PC-9 (cell line): ENCODE measurements at regions of chr16 and their contacts with region 1.

Region 1: DNA sequence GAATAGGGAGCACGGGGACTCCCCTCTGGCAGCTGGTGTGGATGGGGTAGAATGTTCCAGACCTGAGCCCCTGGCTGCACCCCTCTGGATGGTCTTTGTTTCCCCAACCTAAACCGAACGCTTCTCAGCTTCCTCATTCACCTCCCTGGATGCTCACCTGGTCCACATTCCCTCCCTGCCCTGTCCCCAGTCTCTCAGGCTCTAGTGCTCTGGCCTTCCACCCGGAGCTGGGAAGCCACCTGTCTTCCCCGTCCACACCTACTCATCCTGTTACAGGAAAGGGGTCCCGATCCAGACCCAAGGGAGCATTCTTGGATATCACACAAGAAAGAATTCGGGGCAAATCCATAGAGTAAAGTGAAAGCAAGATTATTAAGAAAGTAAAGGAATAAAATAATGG is 73.5 kb downstream of the CYLD start:
- DNase-seq: no peak
- H3K4me3 ChIP-seq: no peak overlapping the region
- H3K27ac ChIP-seq: no peak overlapping the region
- H3K4me1 ChIP-seq: no peaks in the 10 kb centered on the region
- H3K27me3 ChIP-seq: peaks cover 74% of the 10 kb centered on the region
- CTCF ChIP-seq: no peak

Region 2: DNA sequence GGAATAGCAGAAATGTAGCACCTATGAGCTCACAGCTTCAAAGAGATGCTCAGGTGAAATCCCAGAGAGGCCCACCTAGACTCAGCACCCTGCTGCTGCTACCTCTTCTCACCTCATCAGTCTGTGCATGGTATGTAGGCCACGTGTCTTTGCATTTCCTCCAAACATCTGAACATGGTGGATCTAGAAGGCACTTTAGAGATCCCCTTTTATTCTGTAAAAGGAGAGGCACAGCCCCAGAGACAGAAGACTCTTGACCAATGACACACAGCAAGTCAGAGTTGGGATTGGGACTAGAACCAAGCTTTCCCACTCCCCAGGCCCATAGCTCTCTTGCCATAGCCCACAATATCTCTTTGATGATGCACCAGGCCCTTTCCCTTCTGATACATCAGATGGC is 286.6 kb before region 1 on chr16:
- CTCF ChIA-PET with region 1: interaction called, 11 read pairs
- POLR2A ChIA-PET with region 1: no interaction called
- intact Hi-C with region 1: no loop called
- DNase-seq: no peak
- H3K4me3 ChIP-seq: no peak overlapping the region
- H3K27ac ChIP-seq: no peak overlapping the region
- H3K4me1 ChIP-seq: peaks cover 24% of the 10 kb centered on the region
- H3K27me3 ChIP-seq: no peaks in the 10 kb centered on the region
- CTCF ChIP-seq: no peak

Region 3: DNA sequence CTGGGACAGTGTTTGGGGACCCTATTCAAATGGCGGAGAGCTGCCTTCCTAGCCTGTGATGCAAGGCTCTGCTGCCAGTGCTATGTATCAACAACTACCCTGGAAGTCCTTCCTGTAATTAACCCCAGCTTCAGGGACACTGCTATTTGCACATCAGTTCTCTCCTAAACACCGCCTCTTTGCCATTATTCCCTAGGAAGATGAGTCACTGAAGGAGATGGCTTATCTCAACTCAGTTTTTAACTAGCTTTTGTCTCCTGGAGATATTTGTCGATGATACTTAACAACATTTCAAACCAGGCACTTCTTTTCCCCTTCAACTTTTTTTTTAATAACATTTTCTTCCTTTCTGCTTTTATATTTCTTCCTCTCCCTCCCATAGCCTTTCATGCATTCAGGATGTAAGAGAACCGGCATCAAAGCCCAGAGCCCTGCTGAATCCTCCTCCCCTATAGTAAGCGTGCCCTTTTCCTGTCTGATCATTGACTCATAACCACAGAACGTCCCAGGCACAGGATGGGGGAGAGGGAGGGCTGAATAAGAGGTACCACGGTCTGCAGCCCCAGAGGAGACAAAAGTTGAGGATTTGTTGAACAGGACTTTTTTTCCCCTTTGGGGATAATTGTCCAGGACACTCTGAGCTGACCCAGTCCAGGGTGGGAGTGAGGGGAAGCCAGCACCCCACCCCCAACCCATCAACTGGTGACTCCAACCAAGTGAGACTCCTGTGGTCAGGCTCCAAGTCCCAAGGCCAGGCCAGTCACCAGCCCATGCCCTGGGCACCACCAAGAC is 723.5 kb after region 1 on chr16:
- CTCF ChIA-PET with region 1: no interaction called
- POLR2A ChIA-PET with region 1: no interaction called
- intact Hi-C with region 1: no loop called
- DNase-seq: no peak
- H3K4me3 ChIP-seq: no peak overlapping the region
- H3K27ac ChIP-seq: no peak overlapping the region
- H3K4me1 ChIP-seq: no peaks in the 10 kb centered on the region
- H3K27me3 ChIP-seq: 0 out of 2 replicates have a peak, but pooled peaks cover 4% of the 10 kb centered on the region
- CTCF ChIP-seq: no peak